Endothelial cell of umbilical vein (primary cell): ENCODE measurements at regions of chr15 and their contacts with region 1.

Region 1: DNA sequence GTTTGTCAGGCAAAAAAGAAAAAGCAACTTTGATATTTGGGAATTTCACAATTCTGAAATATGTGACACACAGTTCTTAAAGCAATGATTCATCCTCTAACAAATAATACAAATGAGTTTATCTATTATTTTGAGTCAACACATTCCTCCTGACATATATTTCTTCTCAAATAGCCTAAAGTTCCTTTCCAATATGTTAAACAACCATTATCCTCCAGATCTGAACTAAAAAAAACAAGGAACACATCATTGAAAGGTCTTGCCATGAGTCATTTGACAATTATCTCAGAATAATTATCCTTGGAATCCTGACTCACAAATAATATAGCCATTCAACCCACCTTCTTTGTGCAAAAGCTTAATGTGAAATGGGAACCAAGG is 208.7 kb upstream of the CDIN1 start:
- DNase-seq: peak; percentile 57
- H3K4me3 ChIP-seq: no peak overlapping the region
- H3K27ac ChIP-seq: peak overlapping the region; percentile 64
- H3K4me1 ChIP-seq: peaks cover 28% of the 10 kb centered on the region
- H3K27me3 ChIP-seq: no peaks in the 10 kb centered on the region
- CTCF ChIP-seq: no peak
- POLR2A ChIP-seq: no peak

Region 2: DNA sequence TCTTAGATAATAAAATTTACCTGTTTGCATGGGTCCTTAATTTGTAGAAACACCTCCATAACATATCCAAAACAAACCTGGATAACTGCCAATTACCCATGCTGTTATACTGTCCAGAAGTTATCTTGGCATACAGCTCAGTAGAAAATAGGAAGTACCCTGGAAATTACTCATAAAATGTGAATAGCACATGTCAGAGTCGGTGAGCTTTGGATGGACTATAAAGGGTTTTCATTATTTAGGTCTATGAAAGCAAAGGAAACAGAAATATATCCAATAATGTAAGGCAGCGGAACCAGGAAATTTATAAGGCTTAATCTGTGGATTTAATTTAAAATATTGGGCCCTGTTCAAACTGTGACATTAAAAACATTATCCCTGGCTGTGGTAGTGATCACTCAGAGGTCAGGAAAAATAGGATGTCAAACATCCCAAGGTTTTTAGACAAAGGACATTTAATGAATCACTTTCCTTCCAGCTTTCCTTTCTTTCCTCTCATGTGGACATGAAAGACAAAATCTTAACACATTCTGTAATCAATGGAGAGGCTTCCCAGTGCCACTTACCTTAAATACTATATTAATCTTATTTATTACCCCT is 365.7 kb before region 1 on chr15:
- CTCF ChIA-PET with region 1: no interaction called
- POLR2A ChIA-PET with region 1: no interaction called
- dilution Hi-C with region 1: no loop called
- intact Hi-C with region 1: loop called (anchors 2 kb)
- DNase-seq: peak; percentile 87
- H3K4me3 ChIP-seq: peak overlapping the region in 1 of 3 experiments; percentile 33
- H3K27ac ChIP-seq: peak overlapping the region; percentile 91
- H3K4me1 ChIP-seq: peaks cover 29% of the 10 kb centered on the region
- H3K27me3 ChIP-seq: no peaks in the 10 kb centered on the region
- CTCF ChIP-seq: no peak
- POLR2A ChIP-seq: no peak

Region 3: DNA sequence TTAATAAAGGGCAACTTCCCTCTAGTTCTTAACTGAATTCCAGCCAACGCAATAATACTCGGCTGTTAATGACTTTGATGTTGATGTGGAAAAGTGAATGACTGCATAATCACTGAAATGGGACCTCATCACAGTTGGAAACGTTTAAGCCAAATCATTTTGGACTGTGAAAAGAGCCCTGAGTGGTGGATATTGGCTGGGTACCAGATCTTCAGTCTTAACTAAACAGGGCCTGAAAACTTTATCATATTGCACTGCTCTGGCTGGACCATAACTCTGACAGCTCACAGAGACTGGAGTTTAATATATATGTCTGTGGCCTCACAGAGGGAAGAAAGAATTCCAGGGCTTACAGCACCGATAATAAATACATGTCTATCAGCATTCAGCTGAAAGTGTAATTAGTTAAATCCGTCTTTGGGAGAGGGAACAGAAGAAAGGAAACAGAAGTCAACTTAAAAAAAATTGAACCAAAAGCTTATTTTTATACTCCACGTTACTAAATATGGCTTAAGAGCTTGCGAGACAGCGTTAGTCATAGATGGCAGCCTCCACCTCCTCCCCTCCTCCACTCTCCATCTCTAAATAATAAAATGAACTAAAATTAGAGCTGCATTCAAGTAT is 13.6 kb before region 1 on chr15:
- CTCF ChIA-PET with region 1: interaction called, 10 read pairs
- POLR2A ChIA-PET with region 1: no interaction called
- dilution Hi-C with region 1: no loop called
- intact Hi-C with region 1: no loop called
- DNase-seq: peak; percentile 20
- H3K4me3 ChIP-seq: no peak overlapping the region
- H3K27ac ChIP-seq: no peak overlapping the region
- H3K4me1 ChIP-seq: no peaks in the 10 kb centered on the region
- H3K27me3 ChIP-seq: no peaks in the 10 kb centered on the region
- CTCF ChIP-seq: no peak
- POLR2A ChIP-seq: no peak

Region 4: DNA sequence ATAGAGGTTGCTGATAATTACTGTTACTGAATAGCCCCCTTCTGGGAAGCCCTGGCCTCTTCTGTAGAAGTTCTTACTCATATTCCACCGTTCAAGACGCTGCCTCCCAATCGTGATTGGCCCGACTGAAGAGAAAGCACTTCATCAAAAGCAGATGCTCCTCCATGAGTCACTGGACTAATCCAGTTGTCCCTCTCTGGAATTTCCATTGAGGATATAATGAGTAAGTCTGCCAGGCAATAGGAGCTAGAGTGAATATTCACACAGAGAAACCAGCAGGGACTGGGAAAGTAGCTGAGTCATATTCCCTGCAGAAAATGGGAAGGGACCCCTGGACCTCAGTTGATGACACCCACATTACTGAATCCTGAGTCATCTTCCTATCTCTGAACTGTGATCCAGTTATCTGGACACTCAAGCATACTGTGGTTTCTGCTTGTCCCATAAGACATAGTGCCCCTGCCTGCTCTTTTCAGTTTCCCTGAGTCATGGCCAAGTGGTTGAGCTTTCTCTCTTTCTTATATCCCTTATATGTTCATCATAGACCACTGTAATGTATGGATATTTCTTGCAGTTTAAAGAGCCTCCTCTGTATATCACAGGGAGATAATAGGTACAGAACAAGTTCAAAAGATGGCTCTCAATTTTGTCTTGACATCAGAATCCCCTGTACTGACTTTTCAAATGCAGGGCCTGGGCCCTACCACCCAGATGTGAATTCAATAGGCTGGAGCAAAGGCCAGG is 57.5 kb after region 1 on chr15:
- CTCF ChIA-PET with region 1: interaction called, 4 read pairs
- POLR2A ChIA-PET with region 1: no interaction called
- dilution Hi-C with region 1: no loop called
- intact Hi-C with region 1: loop called (anchors 2 kb)
- DNase-seq: peak; percentile 91
- H3K4me3 ChIP-seq: no peak overlapping the region
- H3K27ac ChIP-seq: peak overlapping the region; percentile 85
- H3K4me1 ChIP-seq: peaks cover 15% of the 10 kb centered on the region
- H3K27me3 ChIP-seq: no peaks in the 10 kb centered on the region
- CTCF ChIP-seq: no peak
- POLR2A ChIP-seq: no peak